Sigmoid colon (tissue), 7 donors: ENCODE measurements at regions of chr14 and their contacts with region 1.

Region 1: DNA sequence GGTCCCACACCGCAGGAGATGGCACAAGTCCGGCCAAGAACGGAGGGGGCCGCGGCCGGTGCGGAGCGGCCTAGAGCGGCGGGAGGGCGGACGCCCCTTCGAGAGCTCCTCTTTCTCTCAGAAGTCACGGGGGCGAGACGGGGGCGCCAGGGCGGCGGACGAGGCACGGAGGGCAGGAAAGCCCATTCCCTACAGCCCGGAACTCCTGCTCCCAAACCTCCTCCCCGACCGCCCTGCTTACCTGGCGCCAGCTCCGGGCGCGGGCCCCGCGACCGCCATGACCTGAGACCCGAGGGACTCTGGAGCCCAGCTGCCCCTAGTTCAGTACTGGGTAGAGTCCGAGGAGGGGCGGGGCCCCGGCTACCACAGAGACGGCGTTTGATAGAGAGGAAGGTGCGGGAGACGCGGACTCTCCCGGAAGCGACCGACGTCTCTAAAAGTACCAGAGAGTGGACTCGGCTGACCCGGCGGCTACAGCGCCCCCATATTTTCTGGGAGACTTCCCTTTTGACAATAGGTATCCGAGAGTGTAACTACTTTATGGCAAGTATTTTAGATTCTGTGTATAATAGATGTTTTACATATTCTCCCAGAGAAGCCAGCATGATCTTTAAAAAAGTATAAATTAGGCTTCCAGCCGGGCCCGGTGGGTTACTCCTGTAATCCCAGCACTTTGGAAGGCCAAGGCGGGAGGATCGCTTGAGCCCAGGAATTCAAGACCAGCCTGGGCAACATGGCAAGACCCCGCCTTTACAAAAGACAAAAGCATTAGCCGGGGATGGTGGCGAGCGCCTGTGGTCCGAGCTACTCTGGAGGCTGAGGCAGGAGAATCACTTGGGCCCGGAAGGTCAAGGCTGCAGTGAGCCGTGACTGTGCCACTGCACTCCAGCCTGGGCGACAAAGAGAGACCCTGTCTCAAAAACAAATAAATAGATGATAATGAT is at the start of gene ABCD4:
- DNase-seq: peak; percentile 96
- H3K4me3 ChIP-seq: peak within 1 kb of the TSS; percentile 50 to 87 (median 82)
- H3K27ac ChIP-seq: peak within 1 kb of the TSS; percentile 76 to 90 (median 88)
- H3K4me1 ChIP-seq: peaks cover 0 to 31% (median 22%) of the 10 kb centered on the region in 4 donors
- H3K27me3 ChIP-seq: no peaks in the 10 kb centered on the region
- CTCF ChIP-seq: peak in 1 of 4 experiments; percentile 21
- EP300 ChIP-seq: no peak
- POLR2A ChIP-seq: peak; percentile 36 to 68
- total RNA-seq, gene ABCD4: 27.6 to 50.1 (median 31.3) TPM

Region 2: DNA sequence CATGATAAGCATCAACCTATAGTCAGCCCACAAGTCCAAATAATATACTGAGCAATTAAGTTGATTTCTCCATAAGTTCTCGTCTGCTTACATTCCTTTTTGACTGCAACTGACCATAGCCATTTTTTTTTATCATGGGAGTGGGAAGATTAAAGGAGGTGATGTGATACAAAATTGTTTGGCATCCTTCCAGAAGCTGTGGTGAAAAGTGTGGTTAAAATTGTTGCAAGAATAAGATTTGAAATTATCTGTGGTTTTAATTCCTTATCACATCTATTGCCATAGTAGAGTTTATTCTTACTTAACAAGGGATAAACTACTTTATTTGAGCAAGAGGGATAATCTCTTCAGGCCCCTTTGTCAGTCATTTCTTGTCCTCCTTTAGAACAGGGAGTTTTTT is 167.5 kb before region 1 on chr14:
- intact Hi-C with region 1: no loop called
- DNase-seq: no peak
- H3K4me3 ChIP-seq: no peak overlapping the region
- H3K27ac ChIP-seq: no peak overlapping the region
- H3K4me1 ChIP-seq: peaks cover 0 to 9% (median 4%) of the 10 kb centered on the region in 4 donors
- H3K27me3 ChIP-seq: no peaks in the 10 kb centered on the region
- CTCF ChIP-seq: no peak
- EP300 ChIP-seq: no peak
- POLR2A ChIP-seq: no peak

Region 3: GRCh38 chr14:74257078-74257989 is 45.6 kb before region 1 on chr14:
- intact Hi-C with region 1: loop called (anchors 5 kb)
- DNase-seq: no peak
- H3K4me3 ChIP-seq: peak overlapping the region; percentile 37 to 63 (median 50)
- H3K27ac ChIP-seq: peak overlapping the region in 1 of 4 donors; percentile 29
- H3K4me1 ChIP-seq: peaks cover 0 to 19% (median 15%) of the 10 kb centered on the region in 4 donors
- H3K27me3 ChIP-seq: peaks cover 0 to 20% (median 6%) of the 10 kb centered on the region in 3 donors
- CTCF ChIP-seq: peak; percentile 33 to 100 (median 66)
- EP300 ChIP-seq: no peak
- POLR2A ChIP-seq: no peak

Region 4: DNA sequence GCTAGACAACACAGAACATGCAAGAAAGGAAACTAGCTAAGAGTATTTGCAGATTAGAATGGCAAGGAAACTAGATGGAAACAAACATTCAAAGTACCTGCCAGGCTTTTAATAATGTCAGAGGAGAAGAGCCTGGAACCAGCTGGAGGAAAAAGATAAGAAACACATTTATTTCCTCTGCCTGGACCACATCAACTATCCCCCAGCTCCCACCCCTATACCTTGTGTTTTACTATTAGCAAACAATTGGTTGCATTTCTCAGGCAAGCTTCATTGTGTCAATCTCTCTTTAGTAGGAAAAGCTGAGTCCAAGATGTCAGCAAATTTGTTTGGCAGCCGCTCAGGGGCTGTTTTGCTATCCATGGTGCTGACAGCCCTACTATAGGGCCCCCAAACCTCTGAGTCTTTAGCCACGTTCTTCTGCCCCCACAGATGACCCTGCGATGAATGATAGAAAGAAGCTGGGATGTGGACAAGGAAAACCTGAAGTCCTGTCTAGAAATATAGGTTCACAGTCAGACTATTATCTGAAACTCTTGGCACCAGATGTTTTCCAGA is 134.7 kb after region 1 on chr14:
- intact Hi-C with region 1: no loop called
- DNase-seq: no peak
- H3K4me3 ChIP-seq: no peak overlapping the region
- H3K27ac ChIP-seq: no peak overlapping the region
- H3K4me1 ChIP-seq: no peaks in the 10 kb centered on the region
- H3K27me3 ChIP-seq: no peaks in the 10 kb centered on the region
- CTCF ChIP-seq: no peak
- EP300 ChIP-seq: no peak
- POLR2A ChIP-seq: no peak